ENCODE measurements at regions of chr3 and their contacts with region 1.

Region 1: DNA sequence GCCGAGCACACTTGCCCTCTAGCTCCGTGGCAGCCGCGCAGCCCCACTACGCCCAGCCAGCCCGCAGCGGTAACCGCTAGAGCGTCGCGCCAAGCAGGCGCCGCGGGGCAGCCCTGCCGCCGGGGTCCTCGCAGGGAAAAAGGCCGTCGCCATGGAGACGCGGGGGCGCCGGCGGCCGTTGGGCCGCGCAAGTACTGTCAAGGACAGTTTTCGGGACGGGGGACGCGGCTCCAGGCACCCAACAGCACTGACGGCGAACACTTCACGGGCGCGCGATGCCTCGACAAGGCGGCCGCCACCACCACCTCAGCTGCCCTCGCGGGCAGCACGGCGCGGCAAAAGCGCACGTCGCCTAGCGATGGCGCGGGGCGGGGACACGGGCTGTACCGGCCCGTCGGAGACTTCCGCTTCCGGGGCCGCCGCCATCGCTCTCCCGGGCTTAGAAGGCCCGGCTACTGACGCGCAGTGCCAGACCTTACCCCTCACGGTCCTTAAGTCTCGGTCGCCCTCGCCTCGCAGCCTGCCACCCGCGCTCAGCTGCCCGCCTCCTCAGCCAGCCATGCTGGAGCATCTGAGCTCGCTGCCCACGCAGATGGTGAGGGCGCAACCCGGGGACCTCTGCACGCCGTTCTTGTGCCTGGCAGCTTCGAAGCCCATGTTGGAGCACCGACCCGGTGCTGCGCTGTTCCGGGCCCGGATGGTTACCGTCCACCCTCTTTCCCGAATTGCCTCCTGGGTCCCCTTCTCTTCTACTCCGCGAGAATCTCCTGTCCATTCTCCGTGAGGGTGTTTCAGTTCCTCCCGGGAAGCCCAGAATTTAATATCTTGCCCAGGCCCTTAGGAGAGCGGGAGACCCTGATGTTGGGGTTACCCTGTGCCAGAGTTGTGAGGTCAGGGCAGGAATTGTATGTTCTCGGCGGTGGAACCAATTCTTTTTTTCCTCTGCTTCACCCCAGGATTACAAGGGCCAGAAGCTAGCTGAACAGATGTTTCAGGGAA is at the starts of genes GLT8D1 and SPCS1:
- DNase-seq: peak; percentile 82
- H3K4me3 Mint-ChIP-seq: peak within 1 kb of the TSS; percentile 99
- H3K27ac Mint-ChIP-seq: peak within 1 kb of the TSS; percentile 94
- H3K4me1 Mint-ChIP-seq: peaks cover 33% of the 10 kb centered on the region
- H3K27me3 Mint-ChIP-seq: no peaks in the 10 kb centered on the region
- total RNA-seq, gene GLT8D1: 33.9 and 40.6 TPM in 2 replicates
- total RNA-seq, gene SPCS1: 122 and 132 TPM in 2 replicates

Region 2: GRCh38 chr3:52436500-52437149 is 269.4 kb before region 1 on chr3:
- intact Hi-C with region 1: no loop called
- DNase-seq: no peak
- H3K4me3 Mint-ChIP-seq: no peak overlapping the region
- H3K27ac Mint-ChIP-seq: no peak overlapping the region
- H3K4me1 Mint-ChIP-seq: no peaks in the 10 kb centered on the region
- H3K27me3 Mint-ChIP-seq: peaks cover 4% of the 10 kb centered on the region

Region 3: DNA sequence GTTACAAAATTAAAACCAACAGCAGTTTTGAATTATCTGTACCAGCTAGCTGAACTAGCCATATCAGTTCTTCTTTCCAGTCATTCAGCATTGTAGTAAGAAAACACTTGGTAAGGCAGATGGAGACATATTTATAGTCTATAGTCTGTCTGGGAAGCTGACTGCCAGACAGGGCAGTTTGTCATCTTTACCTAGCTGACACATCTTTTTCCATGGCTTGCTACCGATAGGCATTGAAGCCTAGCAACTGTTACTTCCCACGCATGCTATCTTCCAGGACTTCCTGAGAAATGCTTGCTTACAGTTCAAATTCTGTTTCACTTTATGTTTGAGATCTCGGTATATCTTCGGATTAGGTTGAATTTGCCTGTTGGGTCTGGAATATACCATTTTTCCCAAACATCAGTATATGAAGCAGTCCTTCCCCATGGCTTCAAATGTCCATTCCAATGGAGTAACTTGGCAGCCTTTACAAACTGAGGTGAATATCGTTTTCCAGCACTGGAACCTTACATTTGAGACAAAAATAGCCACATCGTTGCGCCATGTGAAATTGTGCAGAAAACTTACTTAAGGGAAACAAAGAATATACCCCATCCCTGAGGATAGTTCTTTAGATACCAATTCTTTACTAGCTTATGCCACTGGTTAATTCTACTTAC is 11.3 kb before region 1 on chr3:
- intact Hi-C with region 1: loop called (anchors 1 kb)
- DNase-seq: no peak
- H3K4me3 Mint-ChIP-seq: no peak overlapping the region
- H3K27ac Mint-ChIP-seq: peak overlapping the region; percentile 58
- H3K4me1 Mint-ChIP-seq: peaks cover 45% of the 10 kb centered on the region
- H3K27me3 Mint-ChIP-seq: no peaks in the 10 kb centered on the region

Region 4: GRCh38 chr3:52770496-52771333 is 64.7 kb after region 1 on chr3 and contains the start of gene NEK4:
- intact Hi-C with region 1: loop called (anchors 1 kb)
- DNase-seq: peak; percentile 84
- H3K4me3 Mint-ChIP-seq: peak within 1 kb of the TSS; percentile 94
- H3K27ac Mint-ChIP-seq: peak within 1 kb of the TSS; percentile 96
- H3K4me1 Mint-ChIP-seq: peaks cover 22% of the 10 kb centered on the region
- H3K27me3 Mint-ChIP-seq: peaks cover 4% of the 10 kb centered on the region
- total RNA-seq, gene NEK4: 27.8 and 32.9 TPM in 2 replicates

Measured in activated T-helper 1 cell treated with anti-CD3 and anti-CD28 coated beads, Interleukin-12 subunit alpha, Interleukin-12 subunit beta, Interleukin-2, Interleukin-4 antibody, amounts not matched to agents 30 ng/mL and 10 ng/mL and 1 ng/mL, durations not matched to agents 14 hours and 24 hours and 36 hours (primary cell).